GM12878 (cell line): ENCODE measurements at regions of chr4 and their contacts with region 1.

Region 1: GRCh38 chr4:73069338-73070073 is at the start of gene COX18:
- DNase-seq: peak; percentile 97
- ATAC-seq: peak; percentile 88
- H3K4me3 ChIP-seq: peak within 1 kb of the TSS; percentile 75
- H3K27ac ChIP-seq: peak within 1 kb of the TSS; percentile 97
- H3K4me1 ChIP-seq: peaks cover 4% of the 10 kb centered on the region; the same call in 1 of the 2 replicates
- H3K27me3 ChIP-seq: no peaks in the 10 kb centered on the region
- CTCF ChIP-seq: no peak
- EP300 ChIP-seq: peak in 1 of 2 experiments; percentile 41; a peak in 1 of 4 replicates
- POLR2A ChIP-seq: peak; percentile 91
- RAD21 ChIP-seq: no peak
- polyA plus RNA-seq, gene COX18: 7.2 to 10.2 TPM

Region 2: DNA sequence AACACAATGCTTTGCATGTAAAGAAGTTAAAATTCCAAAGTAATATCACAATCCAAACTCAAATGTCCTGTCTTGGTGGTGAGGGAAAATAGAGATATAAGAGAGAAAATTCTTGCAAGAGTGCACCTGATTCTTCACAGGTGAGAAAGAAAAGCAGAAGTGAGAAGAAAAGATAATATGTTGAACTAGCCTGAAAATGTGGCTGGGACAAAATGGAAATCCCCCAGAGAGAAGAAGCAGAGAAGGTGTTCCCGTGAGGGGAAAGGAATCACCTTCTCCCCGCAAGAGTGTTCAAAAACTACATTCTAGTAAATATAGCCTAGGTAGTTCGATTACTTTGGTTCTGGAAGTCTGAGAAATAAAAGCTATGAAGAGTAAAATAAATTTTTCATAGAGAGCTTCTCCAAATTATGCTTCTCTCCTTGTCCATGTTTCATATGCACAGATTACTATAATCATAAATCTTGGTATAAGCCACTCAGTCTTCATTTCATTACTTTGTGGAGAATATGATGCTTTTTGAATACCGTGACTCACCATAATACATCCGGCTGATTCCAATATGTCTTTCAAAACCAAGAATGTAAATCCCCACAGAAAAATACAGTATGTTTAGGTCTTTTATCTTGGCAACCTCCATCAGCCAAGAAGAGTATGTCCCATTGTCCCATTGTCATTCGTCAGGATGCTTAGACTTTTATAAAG is 63.1 kb before region 1 on chr4:
- CTCF ChIA-PET with region 1: no interaction called
- POLR2A ChIA-PET with region 1: no interaction called
- RAD21 ChIA-PET with region 1: no interaction called
- SMC1A ChIA-PET with region 1: no interaction called
- in situ Hi-C with region 1: no loop called
- intact Hi-C with region 1: loop called (anchors 2 kb)
- DNase-seq: no peak
- ATAC-seq: peak; percentile 86
- H3K4me3 ChIP-seq: no peak overlapping the region
- H3K27ac ChIP-seq: peak overlapping the region; percentile 46; the same call in 1 of the 2 replicates
- H3K4me1 ChIP-seq: peaks cover 15% of the 10 kb centered on the region; the same call in 1 of the 2 replicates
- H3K27me3 ChIP-seq: no peaks in the 10 kb centered on the region
- CTCF ChIP-seq: no peak
- EP300 ChIP-seq: no peak
- POLR2A ChIP-seq: no peak
- RAD21 ChIP-seq: no peak

Region 3: GRCh38 chr4:73080789-73081188 is 11.3 kb after region 1 on chr4:
- CTCF ChIA-PET with region 1: interaction called, 10 read pairs
- POLR2A ChIA-PET with region 1: interaction called, 11 read pairs
- RAD21 ChIA-PET with region 1: interaction called, 6 read pairs
- SMC1A ChIA-PET with region 1: interaction called, 5 read pairs
- in situ Hi-C with region 1: no loop called
- intact Hi-C with region 1: no loop called
- DNase-seq: no peak
- ATAC-seq: peak; percentile 40; the same call in 2 of the 3 replicates
- H3K4me3 ChIP-seq: no peak overlapping the region
- H3K27ac ChIP-seq: no peak overlapping the region; the same call in 1 of the 2 replicates
- H3K4me1 ChIP-seq: no peaks in the 10 kb centered on the region
- H3K27me3 ChIP-seq: no peaks in the 10 kb centered on the region
- CTCF ChIP-seq: no peak
- EP300 ChIP-seq: no peak
- POLR2A ChIP-seq: no peak
- RAD21 ChIP-seq: no peak

Region 4: DNA sequence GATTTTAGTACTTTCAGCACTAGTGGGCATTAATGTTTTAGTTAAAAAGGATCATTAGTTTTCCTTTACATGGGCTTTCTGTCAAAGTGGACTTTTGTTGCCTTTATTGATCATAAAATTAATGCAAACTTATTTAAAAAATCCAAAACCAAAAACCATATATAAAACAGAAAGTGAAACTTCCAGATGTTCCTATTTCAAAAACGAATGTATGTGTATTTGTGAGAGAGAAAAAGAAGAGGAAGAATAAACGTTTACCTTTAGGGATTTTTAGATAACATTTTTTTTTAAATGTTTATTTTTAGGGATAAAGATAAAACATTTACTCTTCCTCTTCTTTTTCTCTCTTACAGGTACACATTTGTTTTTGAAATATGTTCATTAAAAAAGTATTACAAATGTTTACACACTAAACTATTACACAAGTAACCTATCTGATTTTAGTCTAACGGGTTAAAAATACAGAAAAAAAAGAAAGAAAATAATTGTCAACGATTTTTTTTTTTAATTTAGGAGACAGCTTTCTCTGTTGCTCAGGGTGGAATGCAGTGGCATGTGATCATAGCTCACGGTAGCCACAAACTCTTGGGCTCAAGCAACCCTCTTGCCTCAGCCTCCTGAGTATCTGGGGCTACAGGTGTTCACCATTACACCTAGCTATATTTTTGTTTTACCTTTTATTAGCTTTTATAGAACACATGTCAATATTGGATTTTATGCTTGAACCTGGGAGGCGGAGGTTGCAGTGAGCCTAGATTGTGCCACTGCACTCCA is 16.8 kb after region 1 on chr4:
- CTCF ChIA-PET with region 1: interaction called, 11 read pairs
- POLR2A ChIA-PET with region 1: interaction called, 11 read pairs
- RAD21 ChIA-PET with region 1: interaction called, 6 read pairs
- SMC1A ChIA-PET with region 1: interaction called, 5 read pairs
- in situ Hi-C with region 1: no loop called
- intact Hi-C with region 1: no loop called
- DNase-seq: no peak
- ATAC-seq: no peak
- H3K4me3 ChIP-seq: no peak overlapping the region
- H3K27ac ChIP-seq: 0 out of 2 replicates have a peak overlapping the region, but pooled peaks have one; percentile 18
- H3K4me1 ChIP-seq: no peaks in the 10 kb centered on the region
- H3K27me3 ChIP-seq: no peaks in the 10 kb centered on the region
- CTCF ChIP-seq: no peak
- EP300 ChIP-seq: no peak
- POLR2A ChIP-seq: no peak
- RAD21 ChIP-seq: no peak

Region 5: GRCh38 chr4:74157561-74158465 is 1088.3 kb after region 1 on chr4 and contains the start of gene MTHFD2L:
- CTCF ChIA-PET with region 1: no interaction called
- POLR2A ChIA-PET with region 1: no interaction called
- RAD21 ChIA-PET with region 1: no interaction called
- SMC1A ChIA-PET with region 1: no interaction called
- in situ Hi-C with region 1: loop called (anchors 25 kb)
- intact Hi-C with region 1: no loop called
- DNase-seq: peak; percentile 40
- ATAC-seq: peak; percentile 97
- H3K4me3 ChIP-seq: peak within 1 kb of the TSS; percentile 74
- H3K27ac ChIP-seq: peak within 1 kb of the TSS; percentile 81
- H3K4me1 ChIP-seq: peaks cover 2% of the 10 kb centered on the region; the same call in 1 of the 2 replicates
- H3K27me3 ChIP-seq: peaks cover 0 to 3% of the 10 kb centered on the region in 2 experiments; a peak in 1 of 4 replicates
- CTCF ChIP-seq: no peak
- EP300 ChIP-seq: no peak
- POLR2A ChIP-seq: peak; percentile 98
- RAD21 ChIP-seq: no peak
- polyA plus RNA-seq, gene MTHFD2L: 4.8 to 11.5 TPM